Activated naive CD4-positive, alpha-beta T cell treated with anti-CD3 and anti-CD28 coated beads, Interleukin-2, amount 10 ng/mL, durations not matched to agents 7 days and 5 days (primary cell): ENCODE measurements at regions of chr3 and their contacts with region 1.

Region 1: DNA sequence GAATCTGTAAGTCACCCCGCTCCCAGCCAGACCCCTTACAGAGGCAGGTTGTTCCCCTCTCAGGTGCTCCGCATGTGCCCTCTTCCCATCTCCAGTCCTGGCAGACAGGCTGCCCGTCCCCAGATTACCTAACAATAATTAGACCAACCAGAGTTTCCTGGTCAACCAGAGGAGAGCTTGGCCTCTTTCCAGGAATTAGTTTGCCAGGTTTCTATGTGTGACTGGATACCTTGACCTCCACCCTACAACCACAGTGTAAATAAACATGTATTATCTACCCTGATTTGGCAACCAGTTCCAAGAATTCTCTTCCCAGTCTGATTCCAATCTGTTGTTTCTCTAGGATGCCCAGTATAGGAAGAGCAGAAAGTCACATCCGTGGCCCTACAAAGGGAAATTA is 178.0 kb upstream of the UMPS start:
- DNase-seq: no peak
- H3K4me3 Mint-ChIP-seq: no peak overlapping the region
- H3K27ac Mint-ChIP-seq: no peak overlapping the region
- H3K4me1 Mint-ChIP-seq: peaks cover 11% of the 10 kb centered on the region
- H3K27me3 Mint-ChIP-seq: peaks cover 66% of the 10 kb centered on the region

Region 2: DNA sequence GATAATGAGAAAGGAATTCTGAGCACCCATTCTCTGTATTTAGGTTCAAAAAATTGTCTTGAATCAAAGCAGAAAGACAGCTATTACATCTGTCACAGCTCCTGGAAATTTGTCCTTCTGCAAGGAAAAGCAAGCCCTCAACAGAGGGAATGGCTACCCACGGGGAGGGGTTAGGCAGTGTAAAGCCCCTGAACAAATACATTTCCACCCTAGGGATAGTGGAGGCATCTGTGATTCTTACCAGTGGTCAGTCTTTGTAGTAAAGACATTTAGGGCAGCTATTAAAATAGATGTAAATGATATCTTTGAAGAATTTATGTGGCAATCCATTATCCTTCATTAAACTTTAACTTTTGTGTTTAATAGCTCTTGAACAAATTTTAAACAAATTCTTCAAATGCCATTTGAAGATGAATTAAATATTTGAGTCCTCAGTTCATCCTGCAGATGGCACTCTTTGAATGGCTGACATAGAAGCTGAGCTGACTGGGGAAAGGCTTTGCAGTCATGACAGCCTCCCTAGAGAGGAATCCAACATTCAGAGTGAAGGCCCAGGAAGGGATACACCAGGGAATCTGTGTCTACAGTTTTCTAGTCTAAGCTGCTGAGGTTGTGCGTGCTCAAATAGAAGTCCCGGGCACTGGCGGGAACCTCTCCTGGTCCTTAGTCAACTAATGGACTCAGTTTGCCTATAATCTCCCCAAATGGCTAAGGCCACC is 200.7 kb before region 1 on chr3:
- CTCF ChIA-PET with region 1: interaction called, 10 read pairs
- DNase-seq: no peak
- H3K4me3 Mint-ChIP-seq: no peak overlapping the region
- H3K27ac Mint-ChIP-seq: no peak overlapping the region
- H3K4me1 Mint-ChIP-seq: no peaks in the 10 kb centered on the region
- H3K27me3 Mint-ChIP-seq: peaks cover 8% of the 10 kb centered on the region

Region 3: GRCh38 chr3:124395584-124396338 is 156.5 kb before region 1 on chr3:
- CTCF ChIA-PET with region 1: no interaction called
- DNase-seq: no peak
- H3K4me3 Mint-ChIP-seq: no peak overlapping the region
- H3K27ac Mint-ChIP-seq: no peak overlapping the region
- H3K4me1 Mint-ChIP-seq: no peaks in the 10 kb centered on the region
- H3K27me3 Mint-ChIP-seq: peaks cover 27% of the 10 kb centered on the region